Activated CD8-positive, alpha-beta T cell treated with anti-CD3 and anti-CD28 coated beads for 36 hours (primary cell): ENCODE measurements at regions of chr3 and their contacts with region 1.

Region 1: DNA sequence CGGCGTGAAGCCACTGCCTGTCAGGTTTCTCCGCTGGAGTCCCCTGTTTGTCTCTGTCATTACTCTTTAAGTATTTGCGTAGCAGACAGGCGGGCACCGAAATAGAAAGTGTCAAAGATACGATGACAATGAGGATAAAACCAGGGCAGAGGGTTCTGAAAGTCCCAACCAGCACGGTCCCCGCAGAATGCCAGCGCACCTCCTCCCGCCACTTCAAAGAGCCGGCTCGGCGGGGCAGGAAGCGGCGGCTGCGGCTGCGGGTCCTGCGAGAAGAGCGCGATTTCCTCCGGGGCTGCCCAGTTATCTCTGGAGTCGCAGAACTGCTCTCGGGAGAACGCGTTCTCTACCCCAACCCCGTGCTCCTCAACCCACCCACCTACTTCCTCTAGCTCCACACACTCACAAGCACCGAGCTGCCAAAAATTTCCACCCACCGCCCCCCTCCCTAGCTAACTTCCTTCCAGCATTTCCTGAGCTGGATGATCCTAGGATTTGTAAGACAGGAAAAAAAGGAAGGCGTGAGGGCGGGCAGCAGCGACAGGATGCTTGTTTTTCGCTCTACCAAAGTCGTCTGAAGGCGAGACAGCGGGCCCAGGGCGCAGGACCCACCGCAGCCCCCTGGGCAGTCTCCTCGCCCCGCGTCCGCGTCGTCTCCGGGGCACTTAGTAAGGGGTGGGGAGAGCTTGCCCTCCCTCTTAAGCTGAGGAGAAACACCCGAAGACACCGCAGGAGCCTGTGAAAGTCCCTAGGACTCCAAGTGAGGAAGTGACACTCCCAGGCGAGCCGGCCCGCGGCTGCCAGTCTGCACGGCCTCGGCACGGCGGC is at the start of gene ARHGAP31:
- DNase-seq: peak; percentile 93
- ATAC-seq: peak; percentile 76
- H3K4me3 Mint-ChIP-seq: peak within 1 kb of the TSS; percentile 83
- H3K27ac Mint-ChIP-seq: peak within 1 kb of the TSS; percentile 94
- H3K4me1 Mint-ChIP-seq: peaks cover 47% of the 10 kb centered on the region
- H3K27me3 Mint-ChIP-seq: no peaks in the 10 kb centered on the region
- CTCF ChIP-seq: no peak
- total RNA-seq, gene ARHGAP31: 6.6 to 8.0 TPM

Region 2: GRCh38 chr3:119240591-119241434 is 53.3 kb before region 1 on chr3 and contains the start of gene B4GALT4:
- CTCF ChIA-PET with region 1: interaction called, 26 read pairs
- POLR2A ChIA-PET with region 1: interaction called, 13 read pairs
- intact Hi-C with region 1: loop called (anchors 2 kb)
- DNase-seq: peak; percentile 81
- ATAC-seq: peak; percentile 78
- H3K4me3 Mint-ChIP-seq: peak within 1 kb of the TSS; percentile 83
- H3K27ac Mint-ChIP-seq: peak within 1 kb of the TSS; percentile 99
- H3K4me1 Mint-ChIP-seq: peaks cover 36% of the 10 kb centered on the region
- H3K27me3 Mint-ChIP-seq: no peaks in the 10 kb centered on the region
- CTCF ChIP-seq: no peak
- total RNA-seq, gene B4GALT4: 13.3 to 15.2 TPM

Region 3: DNA sequence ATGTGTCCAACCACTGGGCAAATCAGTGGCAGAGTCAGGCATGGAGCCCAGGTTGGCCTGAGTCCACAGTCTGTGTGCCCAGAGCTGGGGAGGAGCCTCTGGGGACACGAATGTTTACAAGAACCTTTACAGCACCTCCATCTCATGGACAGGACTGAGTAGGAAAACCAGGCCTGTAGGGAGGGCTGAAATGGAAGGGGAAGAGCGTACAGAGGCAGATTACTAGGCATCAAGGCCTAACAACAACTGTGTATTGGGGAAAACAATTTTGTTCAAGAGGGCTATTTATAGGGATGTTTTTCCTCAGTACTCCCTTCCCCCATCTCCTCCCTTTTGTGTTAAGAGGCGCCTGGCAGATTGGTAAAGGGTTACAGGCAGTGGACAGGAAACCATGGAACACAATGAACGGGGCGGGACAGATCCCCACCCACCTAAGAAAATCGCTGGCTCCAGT is 15.0 kb before region 1 on chr3:
- CTCF ChIA-PET with region 1: interaction called, 10 read pairs
- POLR2A ChIA-PET with region 1: interaction called, 3 read pairs
- intact Hi-C with region 1: no loop called
- DNase-seq: no peak
- ATAC-seq: no peak
- H3K4me3 Mint-ChIP-seq: no peak overlapping the region
- H3K27ac Mint-ChIP-seq: no peak overlapping the region
- H3K4me1 Mint-ChIP-seq: peaks cover 10% of the 10 kb centered on the region
- H3K27me3 Mint-ChIP-seq: no peaks in the 10 kb centered on the region
- CTCF ChIP-seq: no peak

Region 4: DNA sequence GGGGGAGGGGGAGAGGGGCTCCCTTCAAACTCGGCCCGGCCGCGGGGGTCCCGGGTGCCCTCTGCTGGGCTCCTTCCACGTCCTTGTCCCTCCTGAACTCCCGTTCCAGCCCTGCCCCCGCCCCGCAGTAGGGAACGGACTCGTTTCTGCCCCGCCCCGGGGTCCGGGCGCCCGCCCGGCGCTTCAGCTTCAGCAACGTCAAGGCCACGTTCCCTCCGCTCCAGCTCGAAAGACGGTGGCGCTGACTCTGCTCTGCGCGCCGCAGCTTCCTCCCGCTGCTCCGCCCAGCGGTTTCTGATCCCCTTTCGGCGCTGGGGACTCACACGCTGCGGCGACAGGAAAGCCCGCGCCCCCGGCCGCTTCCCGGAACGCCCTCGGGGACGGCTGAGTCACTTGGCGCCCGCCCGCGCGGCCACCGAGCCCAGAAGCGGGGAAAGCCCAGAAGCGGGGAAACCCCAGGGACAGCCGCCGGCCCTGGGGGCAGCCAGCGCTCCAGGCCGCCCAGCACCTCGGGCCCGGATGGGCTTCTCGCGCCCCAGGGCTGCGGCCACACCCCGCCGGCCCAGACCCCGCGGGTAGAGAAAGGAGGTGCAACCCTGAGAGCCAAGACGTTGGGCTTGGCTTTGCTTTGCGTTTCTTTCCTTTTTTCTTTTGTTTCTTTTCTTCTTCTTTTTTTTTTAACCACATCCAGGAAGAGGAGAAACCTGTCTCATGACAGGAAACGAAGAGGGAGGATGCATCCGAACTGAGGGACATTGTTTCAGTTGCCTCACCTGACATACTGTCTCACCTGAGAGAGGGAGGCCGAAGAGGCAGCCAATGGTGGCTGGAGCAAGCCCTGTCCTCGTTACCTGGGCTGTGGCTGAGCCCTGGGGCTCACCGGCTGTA is 29.0 kb after region 1 on chr3:
- CTCF ChIA-PET with region 1: interaction called, 13 read pairs
- POLR2A ChIA-PET with region 1: interaction called, 28 read pairs
- intact Hi-C with region 1: loop called (anchors 2 kb)
- DNase-seq: peak; percentile 96
- ATAC-seq: peak; percentile 91
- H3K4me3 Mint-ChIP-seq: peak overlapping the region; percentile 83
- H3K27ac Mint-ChIP-seq: peak overlapping the region; percentile 91
- H3K4me1 Mint-ChIP-seq: peaks cover 48% of the 10 kb centered on the region
- H3K27me3 Mint-ChIP-seq: no peaks in the 10 kb centered on the region
- CTCF ChIP-seq: no peak

Region 5: DNA sequence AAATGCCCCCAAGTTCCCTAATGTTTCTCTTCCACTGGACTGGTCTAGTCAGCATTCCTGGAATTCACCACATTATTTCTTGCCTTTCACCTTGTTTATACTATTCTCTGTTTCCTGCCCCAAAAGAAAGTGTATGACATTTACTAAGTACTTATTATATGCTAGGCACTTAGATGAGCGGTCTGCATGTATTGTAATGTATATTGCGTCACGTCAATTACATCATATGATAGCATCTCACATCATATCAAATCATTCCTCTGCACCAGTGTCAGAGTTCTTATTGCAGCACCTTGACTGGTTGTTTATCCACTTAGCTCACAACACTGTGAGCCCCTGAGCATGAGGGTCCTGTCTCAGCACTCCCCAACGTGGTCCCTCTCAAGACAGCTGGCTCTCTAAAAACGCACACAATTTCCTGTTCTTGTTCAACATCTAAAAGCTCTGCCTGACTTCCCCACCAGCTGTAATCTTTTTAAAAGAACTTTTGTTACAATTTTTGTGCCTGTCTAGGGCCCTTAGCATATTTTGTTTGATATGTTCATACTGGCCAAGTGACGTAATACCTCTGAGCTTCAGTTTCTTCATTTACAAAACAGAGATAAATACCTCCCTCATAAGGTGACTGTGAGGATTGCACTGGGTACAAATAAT is 58.9 kb after region 1 on chr3:
- CTCF ChIA-PET with region 1: interaction called, 13 read pairs
- POLR2A ChIA-PET with region 1: interaction called, 8 read pairs
- intact Hi-C with region 1: loop called (anchors 5 kb)
- DNase-seq: peak; percentile 23
- ATAC-seq: peak; percentile 61
- H3K4me3 Mint-ChIP-seq: no peak overlapping the region
- H3K27ac Mint-ChIP-seq: peak overlapping the region; percentile 45
- H3K4me1 Mint-ChIP-seq: peaks cover 31% of the 10 kb centered on the region
- H3K27me3 Mint-ChIP-seq: no peaks in the 10 kb centered on the region
- CTCF ChIP-seq: peak; percentile 42

Region 6: GRCh38 chr3:119463171-119464169 is 169.4 kb after region 1 on chr3 and contains the start of gene TMEM39A:
- CTCF ChIA-PET with region 1: interaction called, 3 read pairs
- POLR2A ChIA-PET with region 1: interaction called, 3 read pairs
- intact Hi-C with region 1: loop called (anchors 10 kb)
- DNase-seq: peak; percentile 99
- ATAC-seq: peak; percentile 90
- H3K4me3 Mint-ChIP-seq: peak within 1 kb of the TSS; percentile 95
- H3K27ac Mint-ChIP-seq: peak within 1 kb of the TSS; percentile 97
- H3K4me1 Mint-ChIP-seq: peaks cover 35% of the 10 kb centered on the region
- H3K27me3 Mint-ChIP-seq: no peaks in the 10 kb centered on the region
- CTCF ChIP-seq: no peak
- total RNA-seq, gene TMEM39A: 26.0 to 30.7 TPM

Region 7: DNA sequence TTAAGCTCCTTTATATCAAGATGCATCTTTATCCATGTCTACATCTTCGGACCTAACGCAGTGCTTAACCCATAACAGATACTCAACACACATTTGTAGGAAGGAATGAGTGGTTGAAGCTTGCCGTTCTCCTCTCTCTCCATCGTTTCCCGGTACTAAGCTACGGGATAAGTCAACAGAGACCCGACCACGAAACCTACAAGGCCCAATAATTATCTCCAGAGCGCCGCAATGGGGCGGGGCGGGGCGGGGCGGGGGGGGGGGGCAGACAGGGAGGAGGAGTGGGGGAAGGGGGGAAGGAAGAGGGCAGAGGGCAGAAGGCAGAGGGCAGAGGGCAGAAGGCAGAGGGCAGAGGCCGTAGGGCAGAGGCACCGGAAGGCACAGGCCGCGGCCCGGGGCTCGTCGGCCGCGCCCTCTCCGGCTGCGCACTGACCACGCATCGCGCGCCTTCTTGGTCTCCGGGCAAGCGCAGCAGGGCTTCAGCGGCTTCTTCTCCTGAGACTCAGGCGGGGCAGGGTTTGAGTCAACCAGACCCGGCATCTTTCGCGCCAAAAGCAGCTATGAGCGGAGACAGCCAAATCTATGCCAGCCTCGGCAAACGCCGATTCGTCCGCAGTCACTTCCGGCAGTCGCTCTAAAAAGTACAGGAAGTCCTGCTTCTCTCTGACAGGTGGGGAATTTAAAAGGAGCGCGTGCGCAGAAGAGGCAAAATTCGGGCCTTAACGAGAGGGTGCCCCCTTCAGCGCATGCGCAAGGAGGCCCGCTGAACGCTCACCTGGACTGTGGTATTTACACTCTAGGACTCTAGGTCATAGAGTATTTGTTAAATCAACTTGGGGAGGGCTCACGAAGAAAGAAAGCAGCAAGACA is 382.9 kb after region 1 on chr3 and contains the start of gene COX17:
- CTCF ChIA-PET with region 1: interaction called, 4 read pairs
- POLR2A ChIA-PET with region 1: no interaction called
- intact Hi-C with region 1: loop called (anchors 10 kb)
- DNase-seq: peak; percentile 97
- ATAC-seq: peak; percentile 88
- H3K4me3 Mint-ChIP-seq: peak within 1 kb of the TSS; percentile 82
- H3K27ac Mint-ChIP-seq: peak within 1 kb of the TSS; percentile 96
- H3K4me1 Mint-ChIP-seq: peaks cover 36% of the 10 kb centered on the region
- H3K27me3 Mint-ChIP-seq: no peaks in the 10 kb centered on the region
- CTCF ChIP-seq: no peak
- total RNA-seq, gene COX17: 83.6 to 86.7 TPM